ENCODE measurements at regions of chr9 and their contacts with region 1.

Region 1: DNA sequence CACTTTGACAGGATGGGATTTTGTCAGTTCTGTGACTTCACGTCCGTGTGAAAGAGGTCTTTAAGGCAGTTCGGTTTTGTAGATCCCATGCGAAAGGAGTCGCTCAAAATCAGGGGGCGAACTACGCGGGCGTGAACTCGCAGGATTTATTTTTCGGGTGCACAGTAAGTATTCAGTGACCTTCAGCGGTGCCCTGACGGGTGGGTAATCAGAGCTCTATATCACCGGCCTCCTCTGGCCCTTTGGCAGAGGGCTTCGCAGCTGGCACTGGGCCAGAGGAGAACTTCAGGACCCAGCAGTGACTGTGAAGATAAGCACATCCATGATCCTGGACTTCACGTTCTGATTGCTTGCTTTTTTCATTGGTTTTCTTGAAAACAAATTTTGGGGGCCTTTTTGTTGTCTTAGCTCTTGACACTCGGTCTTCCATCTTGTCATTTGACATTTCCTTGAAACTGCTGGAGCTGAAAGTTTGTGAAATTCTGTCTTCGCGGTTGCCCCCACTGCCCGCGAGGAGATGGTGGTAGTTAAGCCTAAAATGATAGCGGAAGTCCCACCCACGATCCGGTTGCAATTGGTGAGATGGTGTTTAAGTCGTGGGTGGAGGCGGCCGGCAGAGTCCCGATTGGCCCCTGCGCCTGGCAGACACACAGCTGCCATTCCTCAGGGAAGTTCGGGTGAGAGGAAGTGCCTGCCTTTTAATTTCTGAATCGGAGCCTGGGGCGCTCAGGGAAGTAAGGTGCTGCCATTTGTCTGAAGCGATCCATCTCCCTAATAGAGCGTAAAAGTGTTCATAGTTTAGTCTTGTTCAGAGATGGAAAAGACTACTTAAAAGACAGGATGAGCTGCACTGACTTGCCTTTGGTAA is at the start of gene FAM120AOS:
- DNase-seq: peak; percentile 92
- ATAC-seq: peak; percentile 68
- H3K4me3 Mint-ChIP-seq: peak within 1 kb of the TSS; percentile 89
- H3K27ac Mint-ChIP-seq: peak within 1 kb of the TSS; percentile 96
- H3K4me1 Mint-ChIP-seq: peaks cover 47% of the 10 kb centered on the region
- H3K27me3 Mint-ChIP-seq: no peaks in the 10 kb centered on the region
- total RNA-seq, gene FAM120AOS: 38.7 to 43.1 TPM

Region 2: DNA sequence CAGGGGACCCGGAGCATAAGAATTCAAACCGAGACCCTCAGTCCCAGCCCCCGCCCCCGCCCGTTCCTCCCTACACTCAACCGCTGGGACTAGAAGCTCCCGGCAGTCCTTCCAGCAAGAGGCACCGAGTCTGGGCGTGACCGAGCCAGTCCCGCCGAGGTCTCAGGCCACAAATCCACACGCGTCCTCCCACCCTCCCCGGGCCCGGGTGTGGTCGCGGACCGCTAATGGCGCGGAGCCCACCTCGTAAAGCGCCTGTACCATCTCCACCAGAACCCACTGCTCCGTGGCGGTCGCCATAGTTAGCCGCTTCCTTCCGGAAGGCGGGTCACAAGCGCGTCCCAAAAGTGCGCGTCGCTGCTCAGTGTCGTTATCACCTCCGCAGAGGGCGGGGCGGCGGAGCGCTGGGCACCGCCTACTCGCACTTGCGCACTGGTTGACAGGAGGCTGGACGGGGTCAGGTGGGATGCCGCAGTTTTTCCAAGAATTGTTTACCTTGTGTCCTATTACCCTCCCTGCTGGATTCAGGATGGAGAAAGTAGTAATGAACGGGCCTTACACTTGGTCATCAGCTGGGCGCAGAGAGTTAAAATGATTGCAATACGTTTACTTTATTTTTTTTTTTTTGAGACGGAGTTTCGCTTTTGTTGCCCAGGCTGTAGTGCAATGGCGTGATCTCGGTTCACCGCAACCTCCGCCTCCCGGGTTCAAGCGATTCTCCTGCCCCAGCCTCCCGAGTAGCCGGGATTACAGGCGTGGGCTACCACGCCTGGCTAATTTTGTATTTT is 1338.0 kb before region 1 on chr9 and contains the start of gene SPTLC1:
- CTCF ChIA-PET with region 1: no interaction called
- POLR2A ChIA-PET with region 1: no interaction called
- intact Hi-C with region 1: loop called in 1 of 2 experiments (anchors 5 kb)
- DNase-seq: peak; percentile 97
- ATAC-seq: peak; percentile 99
- H3K4me3 Mint-ChIP-seq: peak within 1 kb of the TSS; percentile 95
- H3K27ac Mint-ChIP-seq: peak within 1 kb of the TSS; percentile 98
- H3K4me1 Mint-ChIP-seq: peaks cover 26% of the 10 kb centered on the region
- H3K27me3 Mint-ChIP-seq: no peaks in the 10 kb centered on the region
- total RNA-seq, gene SPTLC1: 45.9 to 46.6 TPM

Region 3: GRCh38 chr9:92669890-92670708 is 783.2 kb before region 1 on chr9 and contains the start of gene IPPK:
- CTCF ChIA-PET with region 1: no interaction called
- POLR2A ChIA-PET with region 1: no interaction called
- intact Hi-C with region 1: loop called in 1 of 2 experiments (anchors 10 kb)
- DNase-seq: peak; percentile 99
- ATAC-seq: peak; percentile 94
- H3K4me3 Mint-ChIP-seq: peak within 1 kb of the TSS; percentile 96
- H3K27ac Mint-ChIP-seq: peak within 1 kb of the TSS; percentile 93
- H3K4me1 Mint-ChIP-seq: peaks cover 33% of the 10 kb centered on the region
- H3K27me3 Mint-ChIP-seq: no peaks in the 10 kb centered on the region
- total RNA-seq, gene IPPK: 9.9 to 12.2 TPM

Region 4: DNA sequence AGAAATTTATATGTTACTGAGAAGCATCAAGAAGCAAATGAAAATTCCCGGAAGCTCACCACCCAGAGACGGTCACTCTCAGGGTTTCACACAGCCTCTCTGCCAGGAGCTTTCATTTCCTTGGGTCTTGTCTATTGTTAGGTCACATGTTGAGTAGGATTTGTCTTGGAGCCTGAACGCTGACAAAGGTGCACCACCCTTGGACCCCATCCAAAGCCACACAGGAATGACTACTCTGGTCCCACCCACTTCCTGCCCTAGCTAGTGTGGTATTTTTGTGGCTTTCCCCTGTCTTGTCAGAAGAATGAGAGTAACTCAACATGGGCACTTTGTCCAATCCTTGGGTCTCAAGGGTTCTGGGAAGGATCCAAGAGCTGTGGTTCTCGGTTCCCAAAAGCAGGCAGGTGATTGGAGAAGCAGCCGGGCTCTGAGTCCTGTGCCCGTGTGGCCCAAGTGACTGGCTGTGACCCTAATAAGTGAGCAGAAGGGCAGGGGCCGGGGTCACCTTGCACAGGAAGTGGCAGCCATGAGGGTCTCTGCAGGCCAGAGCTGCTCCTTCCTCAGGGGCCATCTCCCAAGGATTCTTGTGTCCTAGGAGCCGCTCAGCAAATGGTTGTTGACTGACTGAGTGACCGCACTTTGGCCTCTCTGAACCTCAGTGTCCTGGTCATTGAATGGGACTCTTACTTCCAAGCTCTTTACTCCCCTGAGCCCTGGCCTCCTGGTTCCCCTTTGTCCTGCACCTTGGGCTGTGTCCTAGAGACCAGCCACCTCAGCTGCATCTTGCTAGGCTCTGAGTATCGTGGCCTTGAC is 499.0 kb before region 1 on chr9:
- CTCF ChIA-PET with region 1: no interaction called
- POLR2A ChIA-PET with region 1: no interaction called
- intact Hi-C with region 1: loop called in 1 of 2 experiments (anchors 10 kb)
- DNase-seq: peak; percentile 89
- ATAC-seq: peak; percentile 85
- H3K4me3 Mint-ChIP-seq: peak overlapping the region; percentile 66
- H3K27ac Mint-ChIP-seq: peak overlapping the region; percentile 97
- H3K4me1 Mint-ChIP-seq: peaks cover 78% of the 10 kb centered on the region
- H3K27me3 Mint-ChIP-seq: no peaks in the 10 kb centered on the region

Region 5: GRCh38 chr9:93095205-93096130 is 357.8 kb before region 1 on chr9:
- CTCF ChIA-PET with region 1: no interaction called
- POLR2A ChIA-PET with region 1: no interaction called
- intact Hi-C with region 1: loop called (anchors 1 kb)
- DNase-seq: peak; percentile 100
- ATAC-seq: peak; percentile 79
- H3K4me3 Mint-ChIP-seq: peak overlapping the region; percentile 80
- H3K27ac Mint-ChIP-seq: peak overlapping the region; percentile 98
- H3K4me1 Mint-ChIP-seq: peaks cover 77% of the 10 kb centered on the region
- H3K27me3 Mint-ChIP-seq: no peaks in the 10 kb centered on the region

Region 6: DNA sequence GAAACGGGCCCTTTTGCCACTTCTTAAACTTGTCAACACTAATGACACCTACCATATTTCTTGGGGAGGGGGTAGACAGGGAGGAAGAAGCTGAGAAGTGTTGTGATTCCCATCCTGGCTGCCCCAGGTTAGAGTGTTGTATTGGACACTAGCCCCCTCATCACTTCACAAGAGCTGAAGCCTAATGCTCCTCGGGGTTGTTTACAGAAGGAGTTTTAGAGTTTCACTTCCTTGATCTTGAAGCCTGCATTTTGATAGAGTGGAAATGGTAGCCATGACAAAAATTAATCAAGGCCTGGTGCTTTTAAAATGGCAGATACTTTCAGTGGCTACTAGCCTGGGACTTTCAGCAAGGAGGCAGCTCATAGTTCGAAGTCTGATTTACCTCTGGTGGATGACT is 11.1 kb after region 1 on chr9:
- CTCF ChIA-PET with region 1: interaction called, 14 read pairs
- POLR2A ChIA-PET with region 1: interaction called, 6 read pairs
- intact Hi-C with region 1: no loop called
- DNase-seq: no peak
- ATAC-seq: no peak
- H3K4me3 Mint-ChIP-seq: peak overlapping the region; percentile 26
- H3K27ac Mint-ChIP-seq: peak overlapping the region; percentile 87
- H3K4me1 Mint-ChIP-seq: peaks cover 83% of the 10 kb centered on the region
- H3K27me3 Mint-ChIP-seq: no peaks in the 10 kb centered on the region

Region 7: DNA sequence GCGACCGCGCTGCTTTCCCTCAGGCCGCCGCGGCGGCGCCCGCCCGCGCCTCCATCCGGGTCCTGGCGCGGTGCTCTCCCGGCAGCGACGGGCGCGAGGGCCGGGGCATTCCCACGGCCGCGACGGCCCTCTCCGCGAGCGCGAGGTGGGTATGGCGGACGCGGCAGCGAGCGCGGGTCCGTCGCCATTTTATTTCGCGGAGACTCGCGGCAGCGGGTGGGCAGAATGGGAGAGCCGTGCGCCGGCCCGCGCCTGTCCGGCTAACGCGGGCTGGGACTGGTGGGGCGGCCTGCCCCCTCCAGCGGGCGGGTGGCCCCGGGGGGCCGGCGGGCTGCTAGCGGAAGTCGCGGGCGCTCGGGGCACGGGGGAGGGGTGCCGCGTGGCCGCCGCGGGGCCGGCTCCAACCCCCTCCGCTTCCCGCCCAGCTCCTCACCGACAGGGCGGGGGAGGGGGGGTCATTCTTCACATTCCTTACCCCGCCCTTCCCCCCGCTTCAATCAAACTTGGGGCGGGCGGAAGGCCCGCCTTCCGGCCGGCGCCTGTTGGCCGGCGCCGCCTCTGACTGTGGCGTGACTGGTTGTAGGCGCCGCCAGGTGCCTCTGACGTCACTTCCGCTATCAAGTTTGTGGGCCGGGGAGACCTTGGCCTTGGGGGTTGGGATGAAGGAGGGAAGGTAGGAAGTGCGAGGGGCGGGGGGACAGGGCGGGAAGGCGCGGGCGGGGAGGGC is 713.1 kb after region 1 on chr9:
- CTCF ChIA-PET with region 1: no interaction called
- POLR2A ChIA-PET with region 1: no interaction called
- intact Hi-C with region 1: loop called (anchors 1 to 5 kb)
- DNase-seq: peak; percentile 97
- ATAC-seq: peak; percentile 65
- H3K4me3 Mint-ChIP-seq: peak overlapping the region; percentile 89
- H3K27ac Mint-ChIP-seq: peak overlapping the region; percentile 91
- H3K4me1 Mint-ChIP-seq: peaks cover 34% of the 10 kb centered on the region
- H3K27me3 Mint-ChIP-seq: no peaks in the 10 kb centered on the region

Measured in activated CD4-positive, alpha-beta T cell treated with anti-CD3 and anti-CD28 coated beads for 36 hours (primary cell).